ENCODE measurements at regions of chr10 and their contacts with region 1.

Region 1: GRCh38 chr10:77926566-77927401 is at the start of gene DLG5:
- DNase-seq: peak; percentile 80 to 86 (median 82)
- H3K4me3 ChIP-seq: peak within 1 kb of the TSS; percentile 92
- H3K27ac ChIP-seq: peak within 1 kb of the TSS; percentile 79 to 87
- H3K4me1 ChIP-seq: peaks cover 8% of the 10 kb centered on the region
- H3K27me3 ChIP-seq: no peaks in the 10 kb centered on the region
- CTCF ChIP-seq: peak in 2 of 3 donors; percentile 15 to 33
- EP300 ChIP-seq: no peak
- POLR2A ChIP-seq: peak; percentile 4
- total RNA-seq, gene DLG5: 30.5 to 71.9 (median 45.5) TPM

Region 2: GRCh38 chr10:77101341-77101740 is 825.4 kb before region 1 on chr10:
- intact Hi-C with region 1: no loop called
- DNase-seq: no peak
- H3K4me3 ChIP-seq: no peak overlapping the region
- H3K27ac ChIP-seq: no peak overlapping the region
- H3K4me1 ChIP-seq: peaks cover 4% of the 10 kb centered on the region
- H3K27me3 ChIP-seq: no peaks in the 10 kb centered on the region
- CTCF ChIP-seq: no peak
- EP300 ChIP-seq: no peak
- POLR2A ChIP-seq: no peak

Region 3: DNA sequence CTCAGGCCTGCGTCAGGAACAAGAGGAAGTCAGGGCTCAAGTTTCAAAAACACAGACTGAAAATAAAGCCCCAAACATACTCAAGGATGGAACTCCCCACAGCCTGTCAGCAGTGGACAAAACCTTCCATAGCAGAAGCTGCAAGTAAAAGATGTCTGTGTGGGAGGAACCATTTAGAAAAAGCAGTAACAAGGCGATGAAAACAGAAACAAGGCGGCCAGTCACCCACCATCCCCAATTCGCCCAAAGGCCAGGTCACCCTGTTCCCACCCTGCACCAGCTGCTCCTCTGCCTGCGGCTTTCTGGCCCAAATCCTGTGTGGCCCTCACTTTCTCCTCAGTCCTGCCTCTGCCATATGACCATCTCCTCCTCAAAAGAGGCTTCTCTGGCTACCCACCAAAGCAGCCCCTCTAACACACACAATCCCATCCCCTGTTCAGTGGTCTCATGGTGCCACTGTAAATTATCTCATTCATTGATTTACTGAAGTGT is 317.0 kb before region 1 on chr10:
- intact Hi-C with region 1: no loop called
- DNase-seq: peak in 3 of 5 donors; percentile 26 to 59 (median 38)
- H3K4me3 ChIP-seq: no peak overlapping the region
- H3K27ac ChIP-seq: no peak overlapping the region
- H3K4me1 ChIP-seq: peaks cover 2% of the 10 kb centered on the region
- H3K27me3 ChIP-seq: no peaks in the 10 kb centered on the region
- CTCF ChIP-seq: no peak
- EP300 ChIP-seq: no peak
- POLR2A ChIP-seq: no peak

Region 4: GRCh38 chr10:77846718-77847630 is 79.8 kb before region 1 on chr10:
- intact Hi-C with region 1: loop called in 1 of 4 experiments (anchors 10 kb)
- DNase-seq: peak; percentile 75 to 90 (median 86)
- H3K4me3 ChIP-seq: no peak overlapping the region
- H3K27ac ChIP-seq: peak overlapping the region; percentile 32 to 68
- H3K4me1 ChIP-seq: peaks cover 6% of the 10 kb centered on the region
- H3K27me3 ChIP-seq: no peaks in the 10 kb centered on the region
- CTCF ChIP-seq: peak; percentile 91 to 96 (median 94)
- EP300 ChIP-seq: no peak
- POLR2A ChIP-seq: no peak

Region 5: GRCh38 chr10:77857254-77857653 is 69.5 kb before region 1 on chr10:
- intact Hi-C with region 1: loop called in 1 of 4 experiments (anchors 5 kb)
- DNase-seq: peak in 1 of 5 donors; percentile 32
- H3K4me3 ChIP-seq: no peak overlapping the region
- H3K27ac ChIP-seq: no peak overlapping the region
- H3K4me1 ChIP-seq: peaks cover 1% of the 10 kb centered on the region
- H3K27me3 ChIP-seq: no peaks in the 10 kb centered on the region
- CTCF ChIP-seq: no peak
- EP300 ChIP-seq: no peak
- POLR2A ChIP-seq: no peak

Region 6: DNA sequence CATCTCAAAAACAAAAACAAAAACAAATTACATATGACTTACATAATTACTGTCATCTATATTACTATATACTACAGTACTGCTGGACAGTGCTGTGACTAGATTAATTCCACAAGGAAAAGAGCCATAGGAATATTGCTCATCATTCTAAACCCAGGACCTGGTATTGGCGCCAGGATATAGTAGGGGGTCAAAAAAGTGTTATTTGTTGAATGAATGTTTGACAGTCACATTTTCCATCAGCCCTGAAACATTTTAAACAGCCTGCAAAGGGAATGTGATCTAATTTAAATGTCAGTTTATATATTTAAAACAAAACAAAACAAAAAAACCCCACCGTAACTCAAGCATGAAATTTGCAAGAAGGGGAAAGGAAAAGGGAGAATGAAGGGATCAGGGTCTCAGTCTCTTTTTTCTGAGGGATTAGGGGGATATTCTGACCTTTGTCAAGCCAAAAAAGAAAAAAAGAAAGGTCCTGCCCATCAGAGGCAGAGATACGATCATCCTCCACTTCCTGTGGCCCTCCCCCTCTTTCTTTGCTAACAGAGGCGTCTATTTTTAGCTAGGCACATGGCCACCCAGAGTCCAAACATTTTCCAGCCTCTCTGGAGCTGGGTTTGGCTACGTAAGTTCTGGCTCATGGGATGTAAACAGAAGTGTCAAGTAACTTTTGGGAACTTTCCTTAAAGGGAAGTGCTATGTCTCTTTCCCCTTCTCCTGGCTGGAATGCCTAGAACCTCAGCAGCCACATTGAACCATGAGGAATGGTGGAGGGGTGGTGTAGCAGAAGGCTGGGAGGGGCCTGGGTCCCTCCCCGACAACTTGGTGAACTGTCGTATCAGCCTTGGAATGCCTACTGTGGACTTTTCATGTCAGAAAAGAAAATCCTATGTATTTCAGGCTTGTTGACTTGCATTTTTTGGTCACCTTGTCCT is 44.4 kb after region 1 on chr10:
- intact Hi-C with region 1: loop called in 1 of 4 experiments (anchors 10 kb)
- DNase-seq: peak; percentile 70 to 89 (median 80)
- H3K4me3 ChIP-seq: no peak overlapping the region
- H3K27ac ChIP-seq: peak overlapping the region in 1 of 2 donors; percentile 41
- H3K4me1 ChIP-seq: peaks cover 4% of the 10 kb centered on the region
- H3K27me3 ChIP-seq: no peaks in the 10 kb centered on the region
- CTCF ChIP-seq: no peak
- EP300 ChIP-seq: no peak
- POLR2A ChIP-seq: no peak

Region 7: DNA sequence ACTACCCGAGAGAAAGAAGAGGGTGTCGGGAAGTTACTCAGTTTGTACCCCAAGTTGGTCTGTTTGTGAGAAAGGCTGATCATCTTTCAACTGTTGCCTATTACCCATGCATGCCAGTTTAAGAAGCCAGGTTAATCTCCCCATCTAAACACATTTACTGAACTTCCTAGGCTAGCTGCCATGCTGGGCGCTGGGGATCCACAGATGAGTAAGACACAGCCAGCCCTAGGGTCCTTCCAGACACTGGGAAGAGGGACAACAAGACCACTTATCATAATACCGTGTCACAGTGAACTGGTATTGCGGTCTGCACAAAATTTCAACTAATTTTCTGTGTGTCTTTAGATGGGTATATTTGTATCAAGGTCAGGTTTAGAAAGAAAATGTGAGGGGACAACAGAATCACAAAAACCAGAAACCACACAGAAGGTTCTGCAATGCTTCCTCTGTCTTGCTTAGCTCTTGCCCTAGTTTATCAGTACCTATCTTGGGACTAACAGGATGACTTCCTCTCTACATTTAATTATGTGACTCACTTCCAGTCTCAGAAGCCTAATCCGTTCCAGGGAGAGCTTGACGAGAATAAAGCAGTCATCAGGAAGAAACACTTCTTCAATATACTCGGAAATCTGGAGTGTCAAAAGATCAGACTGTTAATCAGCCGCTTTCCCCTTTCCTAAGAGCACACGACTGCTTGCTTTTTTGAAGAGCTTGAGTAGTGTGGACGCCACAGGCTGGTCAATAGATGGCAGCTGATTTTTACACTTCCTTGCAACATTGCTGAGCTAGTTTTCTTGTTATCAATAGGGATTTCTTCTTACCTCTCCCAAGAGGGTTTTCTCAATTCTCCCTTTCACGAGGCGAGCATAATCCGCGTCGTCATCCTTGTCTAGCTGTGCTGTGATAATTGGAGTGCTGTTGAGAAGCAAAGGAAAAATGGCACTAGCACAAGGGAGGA is 56.9 kb after region 1 on chr10:
- intact Hi-C with region 1: loop called in 2 of 4 experiments (anchors 2 to 10 kb)
- DNase-seq: no peak
- H3K4me3 ChIP-seq: no peak overlapping the region
- H3K27ac ChIP-seq: no peak overlapping the region
- H3K4me1 ChIP-seq: no peaks in the 10 kb centered on the region
- H3K27me3 ChIP-seq: no peaks in the 10 kb centered on the region
- CTCF ChIP-seq: no peak
- EP300 ChIP-seq: no peak
- POLR2A ChIP-seq: no peak

Measured in ovary (tissue), 10 donors.